Naive thymus-derived CD4-positive, alpha-beta T cell (primary cell): ENCODE measurements at regions of chr6 and their contacts with region 1.

Region 1: DNA sequence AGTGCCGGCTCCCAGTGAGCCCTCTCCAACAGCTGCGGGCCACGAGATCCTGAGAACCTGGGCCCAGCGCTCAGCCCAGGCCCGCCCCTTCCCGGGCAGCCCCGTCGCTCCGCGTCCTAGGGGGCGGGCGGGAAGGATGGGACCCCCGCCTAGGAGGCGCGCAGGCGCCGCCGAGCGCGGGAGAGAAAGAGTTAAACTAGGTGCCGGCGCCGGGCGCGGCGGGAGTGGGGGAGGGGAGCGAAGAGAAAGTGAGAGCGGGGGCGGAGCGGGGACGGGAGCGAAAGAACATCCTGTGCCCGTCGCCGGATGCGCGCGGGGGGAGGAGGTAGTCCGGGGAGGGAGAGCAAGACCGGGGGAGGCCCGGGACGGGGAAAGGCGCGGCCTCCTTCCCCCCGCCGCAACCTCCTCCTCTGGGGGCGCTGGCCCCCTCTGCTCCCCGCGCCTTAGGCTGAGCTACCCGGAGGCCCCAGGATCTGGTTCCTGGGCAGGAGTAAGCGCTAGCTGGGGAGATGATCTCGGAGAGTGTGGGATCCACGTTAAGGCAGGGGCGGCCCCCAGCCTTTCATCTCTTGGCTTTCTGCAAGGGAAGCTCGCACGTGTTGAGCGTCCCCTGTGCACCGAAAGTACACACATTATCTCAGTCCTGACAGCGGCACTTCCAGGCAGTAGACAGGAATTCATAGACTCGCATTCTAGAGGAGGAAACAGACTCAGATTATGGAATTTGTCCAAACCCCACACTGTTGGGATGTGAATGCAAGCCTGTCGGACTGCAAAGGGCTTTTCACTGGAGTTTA is 4.9 kb upstream of the ARMC12 start:
- DNase-seq: peak; percentile 91 to 98 (median 96)
- ATAC-seq: peak; percentile 79
- H3K4me3 ChIP-seq: peak overlapping the region; percentile 94
- H3K4me3 Mint-ChIP-seq: peak overlapping the region; percentile 76 to 92 (median 88)
- H3K27ac ChIP-seq: peak overlapping the region; percentile 97
- H3K27ac Mint-ChIP-seq: peak overlapping the region; percentile 90 to 99 (median 94)
- H3K4me1 ChIP-seq: peaks cover 68 to 83% of the 10 kb centered on the region in 2 donors
- H3K4me1 Mint-ChIP-seq: peaks cover 50 to 87% (median 75%) of the 10 kb centered on the region in 7 donors
- H3K27me3 ChIP-seq: no peaks in the 10 kb centered on the region
- H3K27me3 Mint-ChIP-seq: no peaks in the 10 kb centered on the region

Region 2: GRCh38 chr6:35342258-35343091 is 389.5 kb before region 1 on chr6 and contains the start of gene PPARD:
- CTCF ChIA-PET with region 1: interaction called, 5 read pairs
- POLR2A ChIA-PET with region 1: no interaction called
- intact Hi-C with region 1: loop called (anchors 1 to 2 kb)
- DNase-seq: peak; percentile 92 to 100 (median 96)
- ATAC-seq: peak; percentile 100
- H3K4me3 ChIP-seq: peak within 1 kb of the TSS; percentile 70
- H3K4me3 Mint-ChIP-seq: peak within 1 kb of the TSS; percentile 88 to 100 (median 98)
- H3K27ac ChIP-seq: peak within 1 kb of the TSS; percentile 97
- H3K27ac Mint-ChIP-seq: peak within 1 kb of the TSS; percentile 88 to 98 (median 97)
- H3K4me1 ChIP-seq: peaks cover 19 to 35% of the 10 kb centered on the region in 2 donors
- H3K4me1 Mint-ChIP-seq: peaks cover 38 to 55% (median 49%) of the 10 kb centered on the region in 7 donors
- H3K27me3 ChIP-seq: no peaks in the 10 kb centered on the region
- H3K27me3 Mint-ChIP-seq: peaks cover 0 to 3% (median 0%) of the 10 kb centered on the region in 5 donors
- total RNA-seq, gene PPARD: 29.3 to 47.1 (median 36.0) TPM

Region 3: DNA sequence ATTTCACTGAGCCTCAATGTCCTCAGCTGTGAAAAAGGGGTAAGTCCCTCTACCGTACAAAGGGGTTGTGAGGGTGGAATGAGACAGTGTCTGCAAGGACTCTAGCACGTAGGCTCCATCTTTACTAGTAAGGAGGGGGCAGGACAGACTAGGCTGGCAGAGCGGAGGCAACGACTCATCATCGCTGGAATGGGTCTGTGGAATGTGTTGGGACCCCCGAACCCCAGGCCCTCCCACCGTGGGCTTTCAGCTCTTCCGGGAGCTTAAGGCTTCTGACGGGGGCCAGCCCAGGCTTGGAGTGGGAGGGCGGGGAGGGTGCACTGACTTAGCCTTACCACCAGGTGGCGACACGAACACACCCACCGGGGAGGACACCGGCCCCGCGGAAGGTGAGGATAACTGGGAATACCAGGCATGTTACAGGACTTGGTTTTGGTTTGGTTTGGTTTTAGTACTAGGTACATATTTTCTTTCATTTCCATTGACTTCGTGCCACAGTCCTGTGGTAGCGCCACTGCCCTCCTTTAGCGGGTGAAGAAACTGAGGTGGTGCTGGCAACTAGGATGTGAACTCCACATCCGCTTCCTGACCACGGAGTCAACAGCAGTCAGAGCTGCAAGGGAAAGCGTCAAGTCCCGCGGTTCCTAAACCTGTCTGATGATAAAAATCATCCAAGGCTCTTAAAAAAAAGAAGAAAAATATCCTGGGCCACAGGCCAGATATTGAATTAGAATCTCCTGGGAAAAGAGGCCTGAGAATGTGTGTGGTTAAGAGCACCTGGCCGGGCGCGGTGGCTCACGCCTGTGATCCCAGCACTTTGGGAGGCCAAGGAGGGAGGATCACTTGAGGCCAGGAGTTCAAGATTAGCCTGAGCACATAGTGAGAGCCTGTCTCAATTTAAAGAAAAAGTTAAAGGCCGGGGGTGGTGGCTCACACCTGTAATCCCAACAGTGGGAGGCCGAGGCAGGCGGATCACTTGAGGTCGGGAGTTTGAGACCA is 209.0 kb before region 1 on chr6:
- CTCF ChIA-PET with region 1: interaction called, 64 read pairs
- POLR2A ChIA-PET with region 1: no interaction called
- intact Hi-C with region 1: loop called (anchors 1 kb)
- DNase-seq: peak; percentile 61 to 82 (median 74)
- ATAC-seq: peak; percentile 89
- H3K4me3 ChIP-seq: no peak overlapping the region
- H3K4me3 Mint-ChIP-seq: peak overlapping the region; percentile 56 to 84 (median 76)
- H3K27ac ChIP-seq: peak overlapping the region; percentile 53
- H3K27ac Mint-ChIP-seq: peak overlapping the region; percentile 53 to 91 (median 77)
- H3K4me1 ChIP-seq: peaks cover 9 to 19% of the 10 kb centered on the region in 2 donors
- H3K4me1 Mint-ChIP-seq: peaks cover 9 to 32% (median 26%) of the 10 kb centered on the region in 7 donors
- H3K27me3 ChIP-seq: no peaks in the 10 kb centered on the region
- H3K27me3 Mint-ChIP-seq: peaks cover 0 to 2% (median 0%) of the 10 kb centered on the region in 5 donors

Region 4: DNA sequence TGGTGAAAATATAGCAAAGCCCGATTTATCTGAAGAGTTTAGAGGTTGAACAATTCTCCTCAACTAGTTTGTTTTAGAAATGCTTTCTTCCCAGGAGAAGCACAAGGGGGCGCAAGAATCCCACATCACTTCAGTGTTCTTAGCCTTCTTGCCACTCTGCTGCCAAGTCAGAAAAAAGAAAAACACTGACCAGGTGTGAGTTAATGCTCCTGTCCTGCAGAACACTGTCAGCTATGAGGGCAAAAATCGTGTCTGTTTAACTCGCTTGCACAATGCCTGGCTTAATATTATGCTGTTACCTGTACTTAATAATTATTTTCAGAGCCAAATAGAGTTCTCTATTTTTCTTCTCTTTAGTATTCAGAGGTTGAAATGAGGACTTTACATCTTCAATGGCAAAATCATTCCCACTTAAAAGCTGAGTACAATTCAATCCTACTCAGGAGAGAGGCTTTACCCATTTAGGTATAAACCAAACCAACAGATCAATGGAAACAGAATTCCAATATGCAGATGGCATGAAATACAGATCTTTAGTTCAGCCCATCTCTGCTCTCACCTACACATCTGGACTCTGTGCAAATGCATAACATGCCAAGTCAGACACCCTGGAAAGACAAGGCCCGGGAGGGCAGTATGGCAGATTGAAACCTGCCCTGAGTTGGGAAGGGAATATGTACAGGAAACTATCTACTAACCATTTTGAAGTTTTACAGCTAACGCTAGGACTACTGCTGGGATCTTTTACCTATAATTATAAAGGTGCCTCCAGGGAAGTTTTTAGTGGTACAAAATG is 147.8 kb before region 1 on chr6:
- CTCF ChIA-PET with region 1: interaction called, 141 read pairs
- POLR2A ChIA-PET with region 1: interaction called, 24 read pairs
- intact Hi-C with region 1: loop called (anchors 1 kb)
- DNase-seq: peak; percentile 43 to 81 (median 75)
- ATAC-seq: peak; percentile 84
- H3K4me3 ChIP-seq: no peak overlapping the region
- H3K4me3 Mint-ChIP-seq: peak overlapping the region in 8 of 10 donors; percentile 16 to 62 (median 46)
- H3K27ac ChIP-seq: peak overlapping the region; percentile 16
- H3K27ac Mint-ChIP-seq: peak overlapping the region; percentile 38 to 94 (median 92)
- H3K4me1 ChIP-seq: peaks cover 7 to 57% of the 10 kb centered on the region in 2 donors
- H3K4me1 Mint-ChIP-seq: peaks cover 31 to 92% (median 79%) of the 10 kb centered on the region in 7 donors
- H3K27me3 ChIP-seq: no peaks in the 10 kb centered on the region
- H3K27me3 Mint-ChIP-seq: no peaks in the 10 kb centered on the region

Region 5: DNA sequence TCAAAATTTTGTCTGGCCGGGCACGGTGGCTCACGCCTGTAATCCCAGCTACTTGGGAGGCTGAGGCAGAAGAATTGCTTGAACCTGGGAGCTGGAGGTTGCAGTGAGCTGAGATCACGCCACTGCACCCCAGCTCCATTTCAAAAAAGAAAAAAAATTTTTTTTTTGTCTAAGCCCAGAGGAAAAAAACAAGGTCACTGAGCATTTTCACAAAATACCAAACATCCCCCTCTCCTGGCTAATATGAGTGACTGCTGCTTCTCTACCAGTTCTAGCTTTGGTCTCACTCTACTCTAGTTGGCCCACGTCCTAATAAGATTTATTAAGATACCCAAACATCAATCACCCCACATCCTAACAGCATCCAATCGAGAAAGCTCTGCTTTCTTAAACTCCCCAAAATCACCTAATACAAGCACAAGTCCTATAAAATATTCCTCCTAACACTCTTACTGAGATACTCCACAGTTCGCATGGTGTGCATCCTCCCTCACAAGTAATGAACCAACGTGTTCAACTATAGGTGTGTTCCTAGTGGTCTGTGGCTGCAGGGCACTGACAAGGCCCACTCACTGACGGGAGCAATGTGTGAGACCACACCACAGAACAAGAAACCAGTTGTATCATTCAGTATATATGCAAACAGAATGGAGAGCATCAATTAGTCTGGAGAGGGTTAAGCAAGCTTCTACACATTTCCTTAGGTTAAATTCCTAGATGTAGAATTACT is 107.4 kb before region 1 on chr6:
- CTCF ChIA-PET with region 1: interaction called, 193 read pairs
- POLR2A ChIA-PET with region 1: interaction called, 20 read pairs
- intact Hi-C with region 1: loop called (anchors 1 to 2 kb)
- DNase-seq: peak in 7 of 9 donors; percentile 40 to 75 (median 70)
- ATAC-seq: peak; percentile 88
- H3K4me3 ChIP-seq: no peak overlapping the region
- H3K4me3 Mint-ChIP-seq: peak overlapping the region in 9 of 10 donors; percentile 11 to 49 (median 34)
- H3K27ac ChIP-seq: peak overlapping the region; percentile 66
- H3K27ac Mint-ChIP-seq: peak overlapping the region; percentile 64 to 93 (median 90)
- H3K4me1 ChIP-seq: peaks cover 5 to 35% of the 10 kb centered on the region in 2 donors
- H3K4me1 Mint-ChIP-seq: peaks cover 13 to 66% (median 55%) of the 10 kb centered on the region in 7 donors
- H3K27me3 ChIP-seq: no peaks in the 10 kb centered on the region
- H3K27me3 Mint-ChIP-seq: no peaks in the 10 kb centered on the region

Region 6: DNA sequence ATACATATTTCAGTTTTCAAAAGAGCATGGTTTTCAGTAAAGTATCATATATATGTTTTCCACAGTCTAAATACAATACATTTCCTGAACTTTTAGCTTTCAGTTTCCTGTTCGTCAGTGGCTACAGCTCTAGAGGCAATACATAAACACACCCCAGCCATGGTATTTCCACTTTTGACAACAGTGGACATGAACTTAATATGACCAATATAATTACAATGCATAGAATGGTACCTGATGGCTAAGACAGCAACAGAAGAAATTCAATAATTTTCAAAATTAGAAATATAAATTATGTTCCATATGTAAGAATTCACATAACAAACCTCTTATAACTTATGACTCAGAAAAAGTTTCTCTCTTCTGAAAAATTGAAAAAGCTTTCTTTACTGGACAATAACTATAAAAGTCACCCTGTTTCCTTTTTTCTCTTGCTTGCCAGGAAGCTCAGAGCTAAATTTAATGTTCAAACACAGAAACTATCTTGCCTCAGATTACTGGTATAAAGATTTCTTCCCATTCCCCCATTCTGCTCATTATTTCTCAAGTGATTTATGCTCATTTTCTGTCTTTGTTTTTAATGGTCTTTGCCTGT is 62.4 kb before region 1 on chr6:
- CTCF ChIA-PET with region 1: interaction called, 20 read pairs
- POLR2A ChIA-PET with region 1: interaction called, 50 read pairs
- intact Hi-C with region 1: loop called (anchors 1 kb)
- DNase-seq: peak in 4 of 9 donors; percentile 29 to 57 (median 38)
- ATAC-seq: peak; percentile 78
- H3K4me3 ChIP-seq: peak overlapping the region; percentile 43
- H3K4me3 Mint-ChIP-seq: peak overlapping the region in 9 of 10 donors; percentile 56 to 88 (median 81)
- H3K27ac ChIP-seq: peak overlapping the region; percentile 79
- H3K27ac Mint-ChIP-seq: peak overlapping the region in 7 of 9 donors; percentile 84 to 98 (median 93)
- H3K4me1 ChIP-seq: peaks cover 33 to 48% of the 10 kb centered on the region in 2 donors
- H3K4me1 Mint-ChIP-seq: peaks cover 32 to 63% (median 48%) of the 10 kb centered on the region in 7 donors
- H3K27me3 ChIP-seq: no peaks in the 10 kb centered on the region
- H3K27me3 Mint-ChIP-seq: no peaks in the 10 kb centered on the region

Region 7: GRCh38 chr6:35719830-35720733 is 11.9 kb before region 1 on chr6:
- CTCF ChIA-PET with region 1: interaction called, 20 read pairs
- POLR2A ChIA-PET with region 1: interaction called, 71 read pairs
- intact Hi-C with region 1: loop called (anchors 1 kb)
- DNase-seq: peak in 1 of 9 donors; percentile 38
- ATAC-seq: peak; percentile 71
- H3K4me3 ChIP-seq: peak overlapping the region; percentile 11
- H3K4me3 Mint-ChIP-seq: peak overlapping the region; percentile 50 to 81 (median 70)
- H3K27ac ChIP-seq: peak overlapping the region; percentile 67
- H3K27ac Mint-ChIP-seq: peak overlapping the region; percentile 82 to 95 (median 90)
- H3K4me1 ChIP-seq: peaks cover 25 to 60% of the 10 kb centered on the region in 2 donors
- H3K4me1 Mint-ChIP-seq: peaks cover 54 to 91% (median 82%) of the 10 kb centered on the region in 7 donors
- H3K27me3 ChIP-seq: no peaks in the 10 kb centered on the region
- H3K27me3 Mint-ChIP-seq: no peaks in the 10 kb centered on the region

Region 8: GRCh38 chr6:35769043-35769610 is 37.2 kb after region 1 on chr6:
- CTCF ChIA-PET with region 1: no interaction called
- POLR2A ChIA-PET with region 1: no interaction called
- intact Hi-C with region 1: no loop called
- DNase-seq: no peak
- ATAC-seq: no peak
- H3K4me3 ChIP-seq: no peak overlapping the region
- H3K4me3 Mint-ChIP-seq: no peak overlapping the region
- H3K27ac ChIP-seq: no peak overlapping the region
- H3K27ac Mint-ChIP-seq: no peak overlapping the region
- H3K4me1 ChIP-seq: no peaks in the 10 kb centered on the region
- H3K4me1 Mint-ChIP-seq: peaks cover 0 to 3% (median under 1%) of the 10 kb centered on the region in 7 donors
- H3K27me3 ChIP-seq: peaks cover 0 to 3% of the 10 kb centered on the region in 2 donors
- H3K27me3 Mint-ChIP-seq: peaks cover 5 to 38% (median 6%) of the 10 kb centered on the region in 5 donors